Activated CD4-positive, alpha-beta T cell treated with anti-CD3 and anti-CD28 coated beads for 36 hours (primary cell): ENCODE measurements at regions of chr6 and their contacts with region 1.

Region 1: DNA sequence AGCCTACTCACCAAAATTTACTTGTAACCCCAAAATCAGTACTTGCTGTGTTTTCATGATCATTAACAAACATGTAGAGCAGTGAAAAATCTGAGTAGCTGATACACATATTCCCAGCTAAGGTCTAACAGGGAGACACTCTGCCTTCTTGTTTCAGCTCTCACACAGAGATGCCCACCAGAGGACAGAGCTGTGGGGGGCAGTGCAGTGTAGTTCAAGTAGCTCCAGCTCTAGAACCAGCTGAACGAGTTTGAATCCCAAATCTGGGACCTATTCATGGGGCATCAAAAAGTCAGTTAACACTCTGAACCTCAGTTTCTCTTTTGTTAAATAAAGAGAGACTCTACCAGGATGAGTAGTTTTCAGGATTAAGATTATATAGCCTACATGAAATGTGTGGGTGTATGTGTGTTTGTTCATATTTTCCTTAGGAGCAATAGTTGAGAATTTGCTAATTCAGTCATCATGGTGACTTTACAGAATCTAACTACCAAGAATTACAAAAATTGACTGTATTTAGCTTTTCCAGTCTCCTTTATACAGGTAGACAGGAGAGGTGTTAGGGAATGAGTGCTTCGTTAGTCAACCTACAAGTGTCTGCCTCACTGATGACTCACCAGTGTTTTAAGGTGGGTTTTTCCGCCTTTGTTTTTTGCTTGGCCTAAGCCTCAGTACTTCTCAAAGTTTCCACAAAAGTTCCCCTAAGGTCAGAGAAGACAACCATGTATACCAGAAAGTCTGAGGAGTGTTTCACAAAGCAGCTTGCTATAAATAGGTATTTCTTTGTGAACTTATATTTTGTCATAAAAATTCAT is 164.0 kb upstream of the RUNX2 start:
- DNase-seq: peak; percentile 61
- ATAC-seq: peak; percentile 92
- H3K4me3 Mint-ChIP-seq: peak overlapping the region; percentile 21
- H3K27ac Mint-ChIP-seq: peak overlapping the region; percentile 93
- H3K4me1 Mint-ChIP-seq: peaks cover 47% of the 10 kb centered on the region
- H3K27me3 Mint-ChIP-seq: no peaks in the 10 kb centered on the region

Region 2: GRCh38 chr6:44285552-44286284 is 878.4 kb before region 1 on chr6:
- CTCF ChIA-PET with region 1: no interaction called
- POLR2A ChIA-PET with region 1: no interaction called
- intact Hi-C with region 1: no loop called
- DNase-seq: no peak
- ATAC-seq: no peak
- H3K4me3 Mint-ChIP-seq: no peak overlapping the region
- H3K27ac Mint-ChIP-seq: no peak overlapping the region
- H3K4me1 Mint-ChIP-seq: no peaks in the 10 kb centered on the region
- H3K27me3 Mint-ChIP-seq: peaks cover 40% of the 10 kb centered on the region

Region 3: DNA sequence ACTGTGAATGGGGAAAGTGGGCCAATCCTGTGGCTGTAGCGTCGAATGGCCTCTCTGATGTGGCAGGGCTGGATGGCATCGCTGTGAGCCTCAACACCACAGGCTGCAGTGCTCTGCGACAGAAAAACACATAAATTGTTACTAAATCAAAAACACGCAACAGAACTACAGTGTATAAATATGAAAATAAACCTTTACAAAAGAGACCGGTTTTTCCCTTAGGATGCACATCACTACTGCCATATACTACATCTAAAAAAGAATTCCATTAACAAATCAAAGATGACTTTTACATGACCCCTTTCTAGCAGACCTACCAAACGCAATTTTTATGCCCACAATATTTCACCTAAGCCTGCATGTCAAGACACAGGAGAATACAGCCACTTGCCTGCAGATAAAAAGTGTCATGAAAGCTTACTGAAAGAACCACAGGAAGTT is 231.5 kb before region 1 on chr6:
- CTCF ChIA-PET with region 1: no interaction called
- POLR2A ChIA-PET with region 1: no interaction called
- intact Hi-C with region 1: loop called in 1 of 2 experiments (anchors 5 kb)
- DNase-seq: peak; percentile 55
- ATAC-seq: peak; percentile 42
- H3K4me3 Mint-ChIP-seq: peak overlapping the region; percentile 67
- H3K27ac Mint-ChIP-seq: peak overlapping the region; percentile 81
- H3K4me1 Mint-ChIP-seq: peaks cover 52% of the 10 kb centered on the region
- H3K27me3 Mint-ChIP-seq: no peaks in the 10 kb centered on the region

Region 4: DNA sequence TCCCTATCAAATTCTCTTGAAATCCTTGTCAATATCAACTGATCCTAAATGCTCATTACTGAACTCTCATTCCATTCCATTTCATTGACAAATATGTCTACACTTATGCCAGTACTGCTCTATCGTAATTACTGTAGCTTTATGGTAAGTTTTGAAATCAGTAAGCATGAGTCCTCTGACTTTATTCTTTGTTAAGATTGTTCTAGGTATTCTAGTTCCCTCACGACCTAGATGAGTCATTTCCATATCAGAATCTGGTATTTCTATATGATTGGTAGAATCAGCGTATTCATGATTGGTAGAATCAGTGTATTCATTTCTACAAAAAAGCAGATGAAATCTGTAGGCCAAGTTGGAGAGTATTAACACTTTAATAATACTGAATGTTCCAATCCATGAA is 154.6 kb before region 1 on chr6:
- CTCF ChIA-PET with region 1: no interaction called
- POLR2A ChIA-PET with region 1: no interaction called
- intact Hi-C with region 1: loop called in 1 of 2 experiments (anchors 1 kb)
- DNase-seq: no peak
- ATAC-seq: peak; percentile 98
- H3K4me3 Mint-ChIP-seq: no peak overlapping the region
- H3K27ac Mint-ChIP-seq: peak overlapping the region; percentile 10
- H3K4me1 Mint-ChIP-seq: peaks cover 16% of the 10 kb centered on the region
- H3K27me3 Mint-ChIP-seq: no peaks in the 10 kb centered on the region

Region 5: GRCh38 chr6:45187836-45188235 is 23.7 kb after region 1 on chr6:
- CTCF ChIA-PET with region 1: no interaction called
- POLR2A ChIA-PET with region 1: no interaction called
- intact Hi-C with region 1: loop called in 1 of 2 experiments (anchors 2 kb)
- DNase-seq: peak; percentile 36
- ATAC-seq: peak; percentile 90
- H3K4me3 Mint-ChIP-seq: no peak overlapping the region
- H3K27ac Mint-ChIP-seq: peak overlapping the region; percentile 9
- H3K4me1 Mint-ChIP-seq: peaks cover 38% of the 10 kb centered on the region
- H3K27me3 Mint-ChIP-seq: no peaks in the 10 kb centered on the region

Region 6: DNA sequence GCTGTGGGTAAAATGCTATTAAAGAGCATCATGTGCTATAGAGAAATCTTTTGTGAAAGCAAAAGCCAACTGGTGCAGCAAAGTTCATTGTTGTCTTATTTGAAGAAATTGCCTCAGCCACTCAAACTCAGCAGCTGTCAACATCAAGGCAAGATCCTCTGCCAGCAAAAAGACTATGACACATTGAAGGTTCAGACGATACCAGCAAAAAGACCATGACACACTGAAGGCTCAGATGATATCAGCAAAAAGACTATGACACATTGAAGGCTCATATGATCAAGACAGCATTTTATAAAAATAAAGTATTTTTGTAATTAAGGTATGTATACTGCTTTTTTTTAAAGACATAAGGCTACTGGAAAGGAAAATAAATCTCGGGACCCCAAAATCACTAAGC is 45.6 kb after region 1 on chr6:
- CTCF ChIA-PET with region 1: no interaction called
- POLR2A ChIA-PET with region 1: no interaction called
- intact Hi-C with region 1: no loop called
- DNase-seq: peak; percentile 8
- ATAC-seq: peak; percentile 83
- H3K4me3 Mint-ChIP-seq: no peak overlapping the region
- H3K27ac Mint-ChIP-seq: no peak overlapping the region
- H3K4me1 Mint-ChIP-seq: peaks cover 29% of the 10 kb centered on the region
- H3K27me3 Mint-ChIP-seq: no peaks in the 10 kb centered on the region